Esophagus muscularis mucosa (tissue), 4 donors: ENCODE measurements at regions of chr15 and their contacts with region 1.

Region 1: DNA sequence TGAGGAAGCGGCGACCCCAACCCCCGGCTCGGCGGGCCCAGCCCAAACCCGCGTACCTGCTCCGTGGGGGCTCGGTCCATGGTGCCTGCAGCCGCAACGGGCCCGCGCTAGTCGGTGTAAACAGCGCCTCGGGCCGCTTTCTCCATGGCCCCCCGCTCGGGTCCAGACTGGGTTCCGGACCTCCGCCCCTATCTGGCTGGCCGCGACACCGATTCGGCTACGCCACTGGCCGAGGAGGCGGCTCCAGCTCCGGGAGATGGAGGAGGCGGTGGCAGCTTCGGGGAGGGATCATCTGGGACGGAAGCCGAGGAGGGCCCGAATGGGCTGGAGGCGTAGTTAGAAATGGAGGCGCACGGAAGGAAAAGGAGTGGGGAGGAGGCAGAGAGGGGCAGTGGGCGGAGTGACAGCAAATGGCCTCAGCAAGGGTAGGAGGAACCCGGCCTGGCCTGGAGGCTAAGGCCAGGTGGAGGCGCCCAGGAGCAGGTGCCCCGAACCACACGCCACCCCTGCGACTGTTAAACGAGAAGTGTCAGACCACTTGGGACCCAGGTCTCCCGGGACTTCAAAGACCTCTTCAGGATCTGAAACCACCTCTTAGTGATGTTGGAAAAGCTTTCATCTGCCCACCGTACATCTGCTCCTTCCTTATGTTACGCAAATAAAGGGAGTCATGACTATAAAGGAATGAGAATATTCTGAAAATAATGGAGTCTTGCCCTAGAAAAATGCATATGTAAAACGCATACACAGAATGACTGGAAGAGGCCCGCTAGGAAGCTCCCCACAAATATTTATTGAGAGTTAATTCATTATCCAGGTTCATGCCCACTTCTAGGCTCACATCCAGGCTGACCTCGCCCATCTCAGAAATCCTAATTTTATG is at the start of gene SECISBP2L:
- DNase-seq: peak; percentile 97
- H3K4me3 ChIP-seq: peak within 1 kb of the TSS; percentile 81 to 97 (median 94)
- H3K27ac ChIP-seq: peak within 1 kb of the TSS; percentile 84 to 94 (median 92)
- H3K4me1 ChIP-seq: peaks cover 20 to 47% (median 42%) of the 10 kb centered on the region in 4 donors
- H3K27me3 ChIP-seq: no peaks in the 10 kb centered on the region
- CTCF ChIP-seq: peak in 2 of 3 experiments; percentile 21 to 26
- EP300 ChIP-seq: no peak
- POLR2A ChIP-seq: peak; percentile 47
- total RNA-seq, gene SECISBP2L: 40.3 to 54.0 (median 44.0) TPM

Region 2: DNA sequence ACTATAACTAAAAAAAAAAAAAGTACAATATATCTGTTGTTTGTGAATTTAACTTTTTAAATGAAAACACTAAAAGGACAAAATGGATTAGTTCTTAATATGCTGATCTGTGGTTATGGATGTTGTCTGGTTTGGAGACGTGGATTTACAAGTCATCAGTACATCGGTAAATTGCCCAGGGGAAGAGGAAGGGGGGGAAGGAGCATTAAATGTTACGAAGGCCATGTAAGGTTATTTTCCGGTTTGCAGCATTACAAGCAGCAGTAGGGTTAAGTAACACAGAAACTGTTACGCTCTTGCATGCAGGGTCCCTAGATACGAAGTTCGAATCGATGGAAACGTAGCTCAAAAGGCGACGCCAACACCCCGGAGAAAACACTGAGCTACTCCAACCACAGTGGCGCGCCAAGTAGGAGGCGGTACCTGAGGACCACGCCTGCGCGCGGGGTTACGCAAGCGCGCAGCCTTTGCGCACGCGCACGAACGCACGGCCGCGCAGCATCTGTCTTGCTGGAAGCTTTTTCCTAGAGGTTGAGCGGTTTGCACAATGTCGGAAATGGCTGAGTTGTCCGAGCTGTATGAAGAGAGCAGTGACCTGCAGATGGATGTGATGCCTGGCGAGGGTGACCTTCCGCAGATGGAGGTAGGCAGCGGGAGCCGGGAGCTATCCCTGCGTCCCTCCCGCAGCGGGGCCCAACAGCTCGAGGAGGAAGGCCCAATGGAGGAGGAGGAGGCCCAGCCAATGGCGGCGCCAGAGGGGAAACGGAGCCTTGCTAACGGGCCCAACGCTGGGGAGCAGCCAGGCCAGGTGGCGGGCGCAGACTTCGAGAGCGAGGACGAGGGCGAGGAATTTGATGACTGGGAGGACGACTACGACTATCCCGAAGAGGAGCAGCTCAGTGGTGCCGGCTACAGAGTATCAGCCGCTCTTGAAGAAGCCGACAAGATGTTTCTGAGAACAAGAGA is 168.5 kb before region 1 on chr15 and contains the start of gene EID1:
- intact Hi-C with region 1: loop called (anchors 5 kb)
- DNase-seq: peak; percentile 98
- H3K4me3 ChIP-seq: peak within 1 kb of the TSS; percentile 69 to 93 (median 72)
- H3K27ac ChIP-seq: peak within 1 kb of the TSS; percentile 86 to 94 (median 92)
- H3K4me1 ChIP-seq: peaks cover 14 to 22% (median 19%) of the 10 kb centered on the region in 4 donors
- H3K27me3 ChIP-seq: no peaks in the 10 kb centered on the region
- CTCF ChIP-seq: peak in 1 of 3 experiments; percentile 18
- EP300 ChIP-seq: no peak
- POLR2A ChIP-seq: peak; percentile 45
- total RNA-seq, gene EID1: 250 to 391 (median 334) TPM

Region 3: GRCh38 chr15:49155110-49155833 is 108.8 kb after region 1 on chr15 and contains the start of gene COPS2:
- intact Hi-C with region 1: loop called (anchors 5 kb)
- DNase-seq: peak; percentile 98
- H3K4me3 ChIP-seq: peak within 1 kb of the TSS; percentile 84 to 92 (median 87)
- H3K27ac ChIP-seq: peak within 1 kb of the TSS; percentile 88 to 93 (median 90)
- H3K4me1 ChIP-seq: peaks cover 21 to 54% (median 47%) of the 10 kb centered on the region in 4 donors
- H3K27me3 ChIP-seq: no peaks in the 10 kb centered on the region
- CTCF ChIP-seq: peak in 1 of 3 experiments; percentile 28
- EP300 ChIP-seq: no peak
- POLR2A ChIP-seq: peak; percentile 48
- total RNA-seq, gene COPS2: 55.2 to 69.4 (median 65.5) TPM